Right lobe of liver (tissue), 6 donors: ENCODE measurements at regions of chr6 and their contacts with region 1.

Region 1: GRCh38 chr6:110398778-110399177 is 16.6 kb downstream of the DDO start:
- DNase-seq: no peak
- ATAC-seq: peak in 2 of 4 donors; percentile 6 to 37
- H3K4me3 ChIP-seq: no peak overlapping the region
- H3K27ac ChIP-seq: no peak overlapping the region
- H3K4me1 ChIP-seq: no peaks in the 10 kb centered on the region
- H3K27me3 ChIP-seq: no peaks in the 10 kb centered on the region
- CTCF ChIP-seq: no peak
- POLR2A ChIP-seq: no peak

Region 2: GRCh38 chr6:109854541-109855308 is 544.1 kb before region 1 on chr6:
- intact Hi-C with region 1: loop called in 1 of 2 experiments (anchors 10 kb)
- DNase-seq: no peak
- ATAC-seq: no peak
- H3K4me3 ChIP-seq: no peak overlapping the region
- H3K27ac ChIP-seq: no peak overlapping the region
- H3K4me1 ChIP-seq: no peaks in the 10 kb centered on the region
- H3K27me3 ChIP-seq: no peaks in the 10 kb centered on the region
- CTCF ChIP-seq: no peak
- POLR2A ChIP-seq: no peak

Region 3: GRCh38 chr6:110179401-110180227 is 219.2 kb before region 1 on chr6 and contains the start of gene WASF1:
- intact Hi-C with region 1: loop called in 1 of 2 experiments (anchors 10 kb)
- DNase-seq: peak; percentile 93 to 96 (median 96)
- ATAC-seq: peak; percentile 95 to 97 (median 96)
- H3K4me3 ChIP-seq: peak within 1 kb of the TSS; percentile 75 to 86 (median 78)
- H3K27ac ChIP-seq: peak within 1 kb of the TSS; percentile 66 to 82 (median 76)
- H3K4me1 ChIP-seq: peaks cover 0 to 39% (median 11%) of the 10 kb centered on the region in 4 donors
- H3K27me3 ChIP-seq: no peaks in the 10 kb centered on the region
- CTCF ChIP-seq: no peak
- POLR2A ChIP-seq: peak; percentile 44
- total RNA-seq, gene WASF1: 3.6 to 6.6 (median 4.8) TPM

Region 4: DNA sequence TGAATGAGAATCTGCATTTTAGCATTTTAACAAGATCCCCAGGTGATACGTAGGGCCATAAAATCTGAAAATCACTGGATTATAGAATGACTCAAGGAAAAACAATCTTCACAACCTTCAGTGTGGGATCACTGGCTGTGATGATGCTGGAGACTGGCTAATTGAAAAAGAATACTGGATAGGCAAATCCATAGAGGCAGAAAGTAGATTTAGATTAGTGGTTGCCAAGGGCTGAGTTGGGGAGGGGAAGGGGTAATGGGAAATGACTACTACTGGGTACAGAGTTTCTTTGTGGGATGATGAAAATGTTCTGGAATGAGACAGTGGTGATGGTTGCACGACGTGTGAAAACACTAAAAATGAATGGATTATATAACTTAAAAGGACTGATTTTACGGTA is 332.4 kb after region 1 on chr6:
- intact Hi-C with region 1: no loop called
- DNase-seq: no peak
- ATAC-seq: no peak
- H3K4me3 ChIP-seq: no peak overlapping the region
- H3K27ac ChIP-seq: no peak overlapping the region
- H3K4me1 ChIP-seq: no peaks in the 10 kb centered on the region
- H3K27me3 ChIP-seq: no peaks in the 10 kb centered on the region
- CTCF ChIP-seq: no peak
- POLR2A ChIP-seq: no peak